Heart left ventricle (tissue), 16 donors: ENCODE measurements at regions of chr15 and their contacts with region 1.

Region 1: GRCh38 chr15:47717036-47717611 is at the start of gene SEMA6D:
- DNase-seq: peak; percentile 77 to 89 (median 82)
- ATAC-seq: peak; percentile 76 to 84 (median 82)
- H3K4me3 ChIP-seq: peak within 1 kb of the TSS; percentile 62 to 96 (median 84)
- H3K27ac ChIP-seq: peak within 1 kb of the TSS; percentile 80 to 94 (median 86)
- H3K4me1 ChIP-seq: peaks cover 0 to 43% (median 24%) of the 10 kb centered on the region in 12 donors
- H3K27me3 ChIP-seq: peaks cover 0 to 33% (median 0%) of the 10 kb centered on the region in 9 donors
- CTCF ChIP-seq: peak in 11 of 12 donors; percentile 30 to 69 (median 54)
- POLR2A ChIP-seq: no peak
- total RNA-seq, gene SEMA6D: 4.9 to 23.2 (median 10.9) TPM

Region 2: DNA sequence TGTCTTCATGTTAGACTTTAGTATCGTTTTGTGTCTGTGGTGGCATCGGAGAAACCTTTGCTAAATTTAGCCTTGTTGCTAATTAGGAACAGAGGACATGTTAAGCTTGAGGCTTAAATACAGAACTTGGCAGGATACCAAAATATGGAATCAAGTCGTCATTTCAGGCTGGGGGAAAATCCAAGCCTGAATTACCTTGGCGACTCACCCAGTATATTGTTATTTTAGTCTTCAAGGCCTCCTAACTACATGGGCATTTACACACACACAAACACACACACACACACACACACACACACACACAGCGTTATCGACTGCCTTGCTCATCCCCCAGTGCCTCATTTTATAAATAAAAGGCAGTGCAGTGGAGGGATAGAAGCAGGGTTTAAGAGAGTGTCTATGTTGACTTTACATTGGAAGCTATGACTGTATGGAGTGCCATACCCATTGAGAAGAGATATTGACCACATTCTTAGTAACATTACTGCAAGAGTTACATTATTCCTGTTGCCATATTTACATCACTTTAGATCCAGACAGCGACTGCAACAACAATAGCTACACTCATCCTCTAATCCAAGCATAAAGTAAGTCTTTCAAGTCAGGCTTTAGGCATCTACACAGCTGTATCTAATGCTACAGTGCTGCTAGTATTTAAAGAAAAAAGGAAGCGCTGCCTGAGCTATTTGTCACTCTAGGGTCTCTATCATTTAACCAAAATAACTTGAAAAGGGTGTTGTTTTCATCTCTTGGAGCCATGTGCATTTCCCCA is 210.6 kb before region 1 on chr15:
- intact Hi-C with region 1: loop called in 6 of 10 experiments (anchors 2 to 10 kb)
- DNase-seq: peak in 3 of 5 donors; percentile 18 to 29 (median 22)
- ATAC-seq: peak; percentile 74 to 91 (median 87)
- H3K4me3 ChIP-seq: no peak overlapping the region
- H3K27ac ChIP-seq: peak overlapping the region in 8 of 12 donors; percentile 11 to 70 (median 43)
- H3K4me1 ChIP-seq: peaks cover 0 to 42% (median 13%) of the 10 kb centered on the region in 12 donors
- H3K27me3 ChIP-seq: peaks cover 0 to 5% (median 0%) of the 10 kb centered on the region in 9 donors
- CTCF ChIP-seq: no peak
- POLR2A ChIP-seq: no peak

Region 3: DNA sequence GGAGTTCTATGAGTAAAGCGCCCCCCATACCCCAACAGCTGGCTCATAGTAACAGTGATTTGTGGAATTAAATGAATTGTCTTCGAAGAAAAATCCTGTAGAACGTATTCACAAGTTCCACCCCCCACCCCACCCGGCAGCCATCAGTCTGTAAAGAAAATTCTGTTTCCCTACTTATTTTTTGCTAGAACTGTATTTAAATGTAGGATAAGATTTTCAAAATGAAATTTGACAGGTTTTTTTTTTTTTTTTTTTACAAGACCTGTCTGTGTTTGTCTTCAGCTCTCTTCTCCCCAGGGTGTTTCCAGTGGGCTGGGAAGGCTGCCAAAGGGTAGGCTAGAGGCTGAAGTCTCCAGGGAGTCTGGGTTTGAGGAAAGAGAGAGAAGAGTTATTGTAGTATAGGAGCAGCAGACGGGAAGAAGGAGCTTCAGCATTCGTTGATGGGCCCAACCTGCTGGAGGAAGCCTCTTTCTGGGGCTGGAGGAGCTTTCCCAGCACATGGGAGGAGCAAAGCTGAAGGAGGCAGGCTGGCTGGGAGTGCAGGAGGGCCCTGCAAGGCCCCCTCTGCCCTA is 130.4 kb before region 1 on chr15:
- intact Hi-C with region 1: loop called in 1 of 10 experiments (anchors 10 kb)
- DNase-seq: peak; percentile 69 to 80 (median 76)
- ATAC-seq: peak in 3 of 4 donors; percentile 48 to 72 (median 55)
- H3K4me3 ChIP-seq: no peak overlapping the region
- H3K27ac ChIP-seq: peak overlapping the region in 2 of 12 donors; percentile 15 to 48
- H3K4me1 ChIP-seq: peaks cover 0 to 13% (median 0%) of the 10 kb centered on the region in 12 donors
- H3K27me3 ChIP-seq: no peaks in the 10 kb centered on the region
- CTCF ChIP-seq: no peak
- POLR2A ChIP-seq: no peak

Region 4: GRCh38 chr15:47778263-47778770 is 61.2 kb after region 1 on chr15:
- intact Hi-C with region 1: loop called in 1 of 10 experiments (anchors 5 kb)
- DNase-seq: no peak
- ATAC-seq: no peak
- H3K4me3 ChIP-seq: no peak overlapping the region
- H3K27ac ChIP-seq: no peak overlapping the region
- H3K4me1 ChIP-seq: no peaks in the 10 kb centered on the region
- H3K27me3 ChIP-seq: no peaks in the 10 kb centered on the region
- CTCF ChIP-seq: no peak
- POLR2A ChIP-seq: no peak

Region 5: DNA sequence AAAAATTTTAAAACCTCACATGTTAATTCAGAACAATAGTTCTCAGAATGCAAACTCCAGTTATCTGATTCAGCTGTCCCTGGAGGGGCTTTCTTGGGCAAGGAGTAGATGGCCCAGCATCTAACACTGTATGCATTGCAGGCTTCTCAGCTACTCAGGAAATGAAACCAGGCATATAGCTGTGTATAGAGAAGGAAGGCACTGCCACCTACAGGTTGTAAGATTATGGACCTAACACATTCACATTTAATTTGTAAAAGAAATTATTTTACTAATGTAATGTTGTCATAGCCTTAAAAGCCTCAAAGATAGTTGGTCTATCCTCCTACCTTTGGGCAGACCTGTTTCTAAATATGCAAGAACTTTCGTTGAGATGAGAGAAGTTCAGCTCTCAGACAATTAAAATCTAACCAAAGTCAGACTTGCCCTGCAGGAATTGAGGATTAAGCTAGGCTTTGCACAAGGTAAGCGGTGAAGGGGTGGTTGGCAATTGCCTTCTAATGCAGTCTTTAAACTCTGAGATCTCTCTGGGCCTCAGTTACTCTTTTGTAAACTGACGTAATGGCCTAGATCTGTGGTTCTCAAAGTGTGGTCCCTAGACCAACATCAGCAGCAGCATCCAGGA is 270.9 kb after region 1 on chr15:
- intact Hi-C with region 1: loop called in 7 of 10 experiments (anchors 2 to 10 kb)
- DNase-seq: peak in 2 of 5 donors; percentile 31 to 34
- ATAC-seq: peak; percentile 75 to 94 (median 88)
- H3K4me3 ChIP-seq: no peak overlapping the region
- H3K27ac ChIP-seq: no peak overlapping the region
- H3K4me1 ChIP-seq: no peaks in the 10 kb centered on the region
- H3K27me3 ChIP-seq: no peaks in the 10 kb centered on the region
- CTCF ChIP-seq: peak; percentile 60 to 84 (median 74)
- POLR2A ChIP-seq: no peak